BJ (cell line): ENCODE measurements at regions of chr1 and their contacts with region 1.

Region 1: GRCh38 chr1:152654110-152654509 is 9.1 kb upstream of the LCE2D start:
- DNase-seq: no peak
- H3K4me3 ChIP-seq: no peak overlapping the region
- H3K27me3 ChIP-seq: no peaks in the 10 kb centered on the region
- CTCF ChIP-seq: peak; percentile 77

Region 2: GRCh38 chr1:152585586-152585985 is 68.5 kb before region 1 on chr1:
- CTCF ChIA-PET with region 1: no interaction called
- POLR2A ChIA-PET with region 1: no interaction called
- DNase-seq: no peak
- H3K4me3 ChIP-seq: no peak overlapping the region
- H3K27me3 ChIP-seq: no peaks in the 10 kb centered on the region
- CTCF ChIP-seq: no peak

Region 3: DNA sequence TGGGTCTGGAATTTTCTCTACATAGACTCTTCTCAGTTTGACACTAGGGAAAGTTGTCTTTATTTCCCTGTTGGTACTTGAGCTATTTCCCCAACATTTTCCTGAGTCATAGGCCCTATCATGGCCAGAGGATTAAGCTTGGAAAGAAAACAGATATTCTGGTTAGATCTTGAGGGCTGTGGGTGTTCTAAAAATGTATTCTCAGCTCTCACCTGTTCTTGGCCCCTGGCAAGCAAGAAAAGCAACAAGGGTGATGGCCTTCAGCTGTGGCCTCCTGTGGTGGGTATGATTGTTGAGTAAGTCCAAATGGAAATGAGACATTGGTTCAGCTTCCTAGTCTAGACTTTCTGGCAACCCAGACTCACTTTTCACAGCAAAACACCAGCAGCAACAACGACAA is 13.8 kb before region 1 on chr1:
- CTCF ChIA-PET with region 1: interaction called, 11 read pairs
- POLR2A ChIA-PET with region 1: no interaction called
- DNase-seq: no peak
- H3K4me3 ChIP-seq: no peak overlapping the region
- H3K27me3 ChIP-seq: no peaks in the 10 kb centered on the region
- CTCF ChIP-seq: no peak